Activated CD4-positive, alpha-beta T cell treated with anti-CD3 and anti-CD28 coated beads, Interleukin-2, amount 10 ng/mL, durations not matched to agents 24 days and 14 days (primary cell): ENCODE measurements at regions of chr2 and their contacts with region 1.

Region 1: GRCh38 chr2:149017116-149017985 is 21.1 kb upstream of the LYPD6B start:
- DNase-seq: peak; percentile 92
- H3K4me3 Mint-ChIP-seq: no peak overlapping the region
- H3K27ac Mint-ChIP-seq: no peak overlapping the region
- H3K4me1 Mint-ChIP-seq: peaks cover 6% of the 10 kb centered on the region
- H3K27me3 Mint-ChIP-seq: no peaks in the 10 kb centered on the region

Region 2: DNA sequence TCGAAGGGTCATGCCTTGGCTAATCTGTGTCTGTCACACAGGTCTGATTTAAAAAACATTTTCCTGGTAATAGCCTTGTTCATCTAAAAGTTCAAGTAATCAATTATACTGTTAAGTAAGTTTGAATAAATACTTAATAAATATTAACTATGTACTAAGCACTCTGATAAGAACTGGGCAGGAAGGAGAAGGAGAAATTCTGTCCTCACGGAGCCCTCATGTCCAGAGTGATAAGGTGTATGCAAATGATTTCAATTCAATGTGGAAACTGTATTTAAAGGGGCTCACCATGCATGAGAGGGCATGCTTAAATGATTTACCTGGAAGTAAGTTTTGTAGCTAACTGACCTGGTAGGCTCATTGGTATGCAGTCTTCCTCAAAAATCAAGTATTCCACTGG is 219.1 kb after region 1 on chr2:
- intact Hi-C with region 1: no loop called
- DNase-seq: no peak
- H3K4me3 Mint-ChIP-seq: no peak overlapping the region
- H3K27ac Mint-ChIP-seq: no peak overlapping the region
- H3K4me1 Mint-ChIP-seq: no peaks in the 10 kb centered on the region
- H3K27me3 Mint-ChIP-seq: no peaks in the 10 kb centered on the region

Region 3: GRCh38 chr2:149313512-149313972 is 296.2 kb after region 1 on chr2:
- intact Hi-C with region 1: loop called (anchors 1 kb)
- DNase-seq: peak; percentile 58
- H3K4me3 Mint-ChIP-seq: no peak overlapping the region
- H3K27ac Mint-ChIP-seq: no peak overlapping the region
- H3K4me1 Mint-ChIP-seq: no peaks in the 10 kb centered on the region
- H3K27me3 Mint-ChIP-seq: peaks cover 6% of the 10 kb centered on the region